ENCODE measurements at regions of chr10 and their contacts with region 1.

Region 1: DNA sequence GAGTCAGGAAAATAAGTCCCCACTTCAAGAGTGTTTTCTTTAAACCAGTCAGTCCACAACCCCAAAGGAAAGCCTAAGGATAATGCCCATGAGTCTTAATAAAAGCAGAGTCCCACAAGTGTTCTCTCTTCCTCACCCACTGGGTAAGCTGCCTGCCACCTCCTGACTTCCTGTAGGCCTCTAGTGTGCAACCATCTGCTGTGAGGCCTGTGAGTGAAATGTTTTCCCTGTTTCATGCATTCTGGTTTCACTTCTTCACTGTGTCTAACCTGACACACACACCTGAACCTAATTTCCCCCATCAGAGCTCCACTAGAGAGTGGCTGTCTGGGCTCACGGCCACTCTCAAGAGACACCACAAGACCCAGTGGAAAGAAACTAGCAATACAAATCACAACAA is 38.9 kb upstream of the GDF10 start:
- DNase-seq: peak in 8 of 9 donors; percentile 33 to 64 (median 57)
- ATAC-seq: peak; percentile 68
- H3K4me3 ChIP-seq: no peak overlapping the region
- H3K4me3 Mint-ChIP-seq: peak overlapping the region; percentile 3 to 75 (median 64)
- H3K27ac ChIP-seq: peak overlapping the region; percentile 70
- H3K27ac Mint-ChIP-seq: peak overlapping the region; percentile 92 to 100 (median 95)
- H3K4me1 ChIP-seq: peaks cover 48 to 81% of the 10 kb centered on the region in 2 donors
- H3K4me1 Mint-ChIP-seq: peaks cover 41 to 97% (median 93%) of the 10 kb centered on the region in 7 donors
- H3K27me3 ChIP-seq: no peaks in the 10 kb centered on the region
- H3K27me3 Mint-ChIP-seq: no peaks in the 10 kb centered on the region

Region 2: GRCh38 chr10:47152861-47153349 is 108.2 kb before region 1 on chr10:
- CTCF ChIA-PET with region 1: no interaction called
- POLR2A ChIA-PET with region 1: no interaction called
- intact Hi-C with region 1: no loop called
- DNase-seq: no peak
- ATAC-seq: no peak
- H3K4me3 ChIP-seq: no peak overlapping the region
- H3K4me3 Mint-ChIP-seq: no peak overlapping the region
- H3K27ac ChIP-seq: no peak overlapping the region
- H3K27ac Mint-ChIP-seq: no peak overlapping the region
- H3K4me1 ChIP-seq: no peaks in the 10 kb centered on the region
- H3K4me1 Mint-ChIP-seq: peaks cover 0 to 13% (median 2%) of the 10 kb centered on the region in 7 donors
- H3K27me3 ChIP-seq: no peaks in the 10 kb centered on the region
- H3K27me3 Mint-ChIP-seq: peaks cover 0 to 17% (median 0%) of the 10 kb centered on the region in 5 donors

Region 3: DNA sequence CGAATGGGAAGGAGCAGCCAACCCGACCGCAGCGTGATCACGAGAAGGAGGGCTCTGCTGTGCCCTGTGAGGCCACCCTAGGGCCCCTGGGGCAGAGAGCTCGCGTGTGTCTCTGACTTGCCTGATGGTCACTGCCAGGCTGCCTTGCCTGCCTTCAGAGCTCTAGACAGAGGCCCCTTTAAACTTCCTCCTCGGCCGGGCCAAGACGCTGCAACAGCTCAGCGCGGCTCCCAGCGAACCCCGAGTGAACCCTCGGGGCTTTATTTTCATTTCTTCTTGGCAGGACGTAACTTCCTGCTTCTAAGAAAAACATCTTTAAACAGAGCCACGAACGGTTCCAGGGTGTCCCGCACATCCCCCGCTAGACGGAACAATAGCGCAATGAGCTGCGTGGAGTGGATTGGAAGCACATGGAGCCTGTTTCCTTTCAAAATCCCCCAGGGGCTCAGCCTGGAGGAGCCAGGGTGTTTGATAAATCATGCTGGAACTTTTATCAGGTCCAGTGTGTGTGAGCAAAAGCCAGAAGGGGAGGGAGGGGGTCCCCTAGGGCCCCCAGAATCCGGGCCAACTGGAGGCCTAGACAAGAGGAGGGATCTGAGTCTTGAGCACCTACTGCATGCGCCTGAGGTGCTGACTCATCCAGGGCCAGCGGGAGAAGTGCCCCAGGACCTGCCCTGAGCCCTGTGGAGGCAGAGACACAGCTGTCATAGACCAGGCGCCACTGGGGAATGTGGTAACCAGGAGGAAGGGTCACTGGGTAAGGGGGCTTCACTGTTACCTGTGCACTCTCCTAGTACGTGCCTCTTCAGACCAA is 95.2 kb before region 1 on chr10:
- CTCF ChIA-PET with region 1: interaction called, 5 read pairs
- POLR2A ChIA-PET with region 1: interaction called, 11 read pairs
- intact Hi-C with region 1: loop called in 1 of 2 experiments (anchors 1 kb)
- DNase-seq: peak; percentile 41 to 80 (median 68)
- ATAC-seq: peak; percentile 82
- H3K4me3 ChIP-seq: peak overlapping the region; percentile 71
- H3K4me3 Mint-ChIP-seq: peak overlapping the region; percentile 79 to 93 (median 92)
- H3K27ac ChIP-seq: peak overlapping the region; percentile 77
- H3K27ac Mint-ChIP-seq: peak overlapping the region; percentile 84 to 100 (median 99)
- H3K4me1 ChIP-seq: peaks cover 12 to 23% of the 10 kb centered on the region in 2 donors
- H3K4me1 Mint-ChIP-seq: peaks cover 19 to 43% (median 28%) of the 10 kb centered on the region in 7 donors
- H3K27me3 ChIP-seq: no peaks in the 10 kb centered on the region
- H3K27me3 Mint-ChIP-seq: peaks cover 0 to 9% (median 0%) of the 10 kb centered on the region in 5 donors

Region 4: GRCh38 chr10:47181052-47181849 is 79.9 kb before region 1 on chr10:
- CTCF ChIA-PET with region 1: no interaction called
- POLR2A ChIA-PET with region 1: no interaction called
- intact Hi-C with region 1: loop called in 1 of 2 experiments (anchors 5 kb)
- DNase-seq: peak in 2 of 9 donors; percentile 7 to 15
- ATAC-seq: no peak
- H3K4me3 ChIP-seq: no peak overlapping the region
- H3K4me3 Mint-ChIP-seq: no peak overlapping the region
- H3K27ac ChIP-seq: no peak overlapping the region
- H3K27ac Mint-ChIP-seq: no peak overlapping the region
- H3K4me1 ChIP-seq: no peaks in the 10 kb centered on the region
- H3K4me1 Mint-ChIP-seq: peaks cover 0 to 13% (median 4%) of the 10 kb centered on the region in 7 donors
- H3K27me3 ChIP-seq: no peaks in the 10 kb centered on the region
- H3K27me3 Mint-ChIP-seq: no peaks in the 10 kb centered on the region

Region 5: DNA sequence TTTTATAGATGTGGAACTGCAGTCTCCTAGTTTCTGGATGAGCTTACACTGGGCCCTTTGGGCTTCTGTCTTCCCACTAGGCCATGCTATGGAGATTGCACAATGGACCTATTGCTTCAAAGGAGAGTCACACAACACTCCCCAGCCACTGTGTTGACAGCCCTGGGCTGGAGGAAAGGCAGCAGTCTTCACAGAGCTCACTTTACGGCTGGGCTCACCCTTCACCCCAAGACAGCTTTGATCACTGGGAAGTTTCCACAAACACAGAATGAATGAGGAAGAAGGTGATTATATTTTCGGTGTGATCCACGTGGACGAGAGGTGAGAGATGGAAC is 53.9 kb before region 1 on chr10:
- CTCF ChIA-PET with region 1: interaction called, 3 read pairs
- POLR2A ChIA-PET with region 1: interaction called, 8 read pairs
- intact Hi-C with region 1: loop called (anchors 1 to 2 kb)
- DNase-seq: peak in 7 of 9 donors; percentile 18 to 38 (median 25)
- ATAC-seq: peak; percentile 66
- H3K4me3 ChIP-seq: peak overlapping the region; percentile 28
- H3K4me3 Mint-ChIP-seq: peak overlapping the region; percentile 63 to 84 (median 74)
- H3K27ac ChIP-seq: peak overlapping the region; percentile 47
- H3K27ac Mint-ChIP-seq: peak overlapping the region; percentile 70 to 99 (median 96)
- H3K4me1 ChIP-seq: peaks cover 25 to 55% of the 10 kb centered on the region in 2 donors
- H3K4me1 Mint-ChIP-seq: peaks cover 23 to 79% (median 70%) of the 10 kb centered on the region in 7 donors
- H3K27me3 ChIP-seq: no peaks in the 10 kb centered on the region
- H3K27me3 Mint-ChIP-seq: no peaks in the 10 kb centered on the region

Region 6: DNA sequence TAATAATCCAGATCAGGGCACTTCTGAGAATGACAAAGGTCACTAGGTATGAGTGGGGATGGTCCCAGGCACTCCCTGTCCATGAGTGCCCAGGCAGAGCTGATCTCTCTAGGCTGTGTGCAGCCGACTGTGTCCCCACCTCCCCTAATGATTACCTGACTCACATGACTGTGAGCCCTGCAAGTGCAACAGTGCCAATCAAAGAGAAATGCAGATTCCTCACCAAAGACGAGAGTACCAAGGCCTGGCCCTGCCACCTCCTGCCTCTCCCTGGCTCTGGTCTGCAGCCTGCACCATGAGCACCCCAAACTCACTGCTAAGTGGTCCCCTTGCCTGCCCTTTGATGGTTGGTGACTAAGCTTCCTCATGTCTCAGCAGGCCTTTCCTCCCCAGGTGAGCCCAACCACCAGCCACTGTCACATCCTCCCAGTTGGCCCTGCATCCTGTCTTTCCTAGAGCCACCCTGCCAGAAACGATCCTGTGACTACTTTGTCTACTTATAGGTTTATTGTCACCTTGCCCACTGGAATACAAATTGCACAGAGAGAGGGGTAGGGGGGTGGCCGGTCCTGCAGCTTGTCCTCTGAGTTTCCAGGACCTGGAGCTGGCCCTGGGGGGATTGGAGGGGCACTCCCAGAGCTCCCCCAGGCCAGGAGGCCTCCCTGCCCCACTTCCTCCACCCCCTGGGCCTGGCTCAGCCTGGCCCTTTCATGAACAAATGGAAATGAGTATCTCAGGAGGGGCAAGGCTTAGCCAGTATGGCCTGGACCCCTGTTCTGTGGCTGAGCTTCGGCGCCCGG is 16.4 kb after region 1 on chr10:
- CTCF ChIA-PET with region 1: interaction called, 5 read pairs
- POLR2A ChIA-PET with region 1: interaction called, 9 read pairs
- intact Hi-C with region 1: loop called in 1 of 2 experiments (anchors 1 kb)
- DNase-seq: peak in 5 of 9 donors; percentile 31 to 36 (median 33)
- ATAC-seq: peak; percentile 57
- H3K4me3 ChIP-seq: no peak overlapping the region
- H3K4me3 Mint-ChIP-seq: peak overlapping the region in 9 of 10 donors; percentile 28 to 65 (median 43)
- H3K27ac ChIP-seq: no peak overlapping the region
- H3K27ac Mint-ChIP-seq: peak overlapping the region in 8 of 9 donors; percentile 15 to 92 (median 72)
- H3K4me1 ChIP-seq: peaks cover 12 to 18% of the 10 kb centered on the region in 2 donors
- H3K4me1 Mint-ChIP-seq: peaks cover 19 to 50% (median 30%) of the 10 kb centered on the region in 7 donors
- H3K27me3 ChIP-seq: no peaks in the 10 kb centered on the region
- H3K27me3 Mint-ChIP-seq: no peaks in the 10 kb centered on the region

Region 7: GRCh38 chr10:47300429-47300931 is 39.4 kb after region 1 on chr10:
- CTCF ChIA-PET with region 1: no interaction called
- POLR2A ChIA-PET with region 1: interaction called, 3 read pairs
- intact Hi-C with region 1: loop called in 1 of 2 experiments (anchors 1 kb)
- DNase-seq: no peak
- ATAC-seq: peak; percentile 38
- H3K4me3 ChIP-seq: peak overlapping the region; percentile 39
- H3K4me3 Mint-ChIP-seq: peak overlapping the region; percentile 52 to 90 (median 86)
- H3K27ac ChIP-seq: no peak overlapping the region
- H3K27ac Mint-ChIP-seq: peak overlapping the region in 3 of 9 donors; percentile 32 to 74 (median 71)
- H3K4me1 ChIP-seq: peaks cover 0 to 13% of the 10 kb centered on the region in 2 donors
- H3K4me1 Mint-ChIP-seq: peaks cover 6 to 47% (median 27%) of the 10 kb centered on the region in 7 donors
- H3K27me3 ChIP-seq: no peaks in the 10 kb centered on the region
- H3K27me3 Mint-ChIP-seq: peaks cover 0 to 60% (median 5%) of the 10 kb centered on the region in 5 donors